Caco-2 (cell line): ENCODE measurements at regions of chrX and their contacts with region 1.

Region 1: GRCh38 chrX:108025954-108026600 is 18.8 kb upstream of the VSIG1 start:
- DNase-seq: no peak
- H3K4me3 ChIP-seq: no peak overlapping the region
- H3K4me3 Mint-ChIP-seq: no peak overlapping the region
- H3K27ac Mint-ChIP-seq: no peak overlapping the region
- H3K4me1 ChIP-seq: no peaks in the 10 kb centered on the region
- H3K4me1 Mint-ChIP-seq: peaks cover 6% of the 10 kb centered on the region
- H3K27me3 ChIP-seq: no peaks in the 10 kb centered on the region
- H3K27me3 Mint-ChIP-seq: no peaks in the 10 kb centered on the region
- CTCF ChIP-seq: no peak

Region 2: DNA sequence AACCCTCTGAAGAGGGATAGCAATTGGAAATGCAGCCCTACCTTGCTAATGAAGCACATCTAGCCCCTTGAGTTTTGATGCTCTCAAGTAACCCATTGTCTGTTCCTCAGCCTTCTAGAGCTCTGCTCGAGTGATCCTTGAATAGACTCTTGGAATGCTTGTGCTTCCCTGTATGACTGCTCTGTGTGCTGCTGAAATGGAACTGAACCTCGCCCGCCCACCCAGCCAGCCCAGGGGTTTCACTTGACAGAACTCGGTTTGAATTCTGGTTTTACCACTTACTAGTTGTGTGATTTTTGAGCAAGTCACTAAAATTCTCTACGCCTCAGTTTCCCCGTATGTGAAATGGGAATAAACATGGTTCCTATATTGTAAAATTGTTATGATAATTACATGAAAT is 123.4 kb before region 1 on chrX:
- CTCF ChIA-PET with region 1: no interaction called
- POLR2A ChIA-PET with region 1: no interaction called
- intact Hi-C with region 1: no loop called
- DNase-seq: no peak
- H3K4me3 ChIP-seq: no peak overlapping the region
- H3K4me3 Mint-ChIP-seq: no peak overlapping the region
- H3K27ac Mint-ChIP-seq: no peak overlapping the region
- H3K4me1 ChIP-seq: no peaks in the 10 kb centered on the region
- H3K4me1 Mint-ChIP-seq: no peaks in the 10 kb centered on the region
- H3K27me3 ChIP-seq: no peaks in the 10 kb centered on the region
- H3K27me3 Mint-ChIP-seq: peaks cover 14% of the 10 kb centered on the region
- CTCF ChIP-seq: no peak

Region 3: DNA sequence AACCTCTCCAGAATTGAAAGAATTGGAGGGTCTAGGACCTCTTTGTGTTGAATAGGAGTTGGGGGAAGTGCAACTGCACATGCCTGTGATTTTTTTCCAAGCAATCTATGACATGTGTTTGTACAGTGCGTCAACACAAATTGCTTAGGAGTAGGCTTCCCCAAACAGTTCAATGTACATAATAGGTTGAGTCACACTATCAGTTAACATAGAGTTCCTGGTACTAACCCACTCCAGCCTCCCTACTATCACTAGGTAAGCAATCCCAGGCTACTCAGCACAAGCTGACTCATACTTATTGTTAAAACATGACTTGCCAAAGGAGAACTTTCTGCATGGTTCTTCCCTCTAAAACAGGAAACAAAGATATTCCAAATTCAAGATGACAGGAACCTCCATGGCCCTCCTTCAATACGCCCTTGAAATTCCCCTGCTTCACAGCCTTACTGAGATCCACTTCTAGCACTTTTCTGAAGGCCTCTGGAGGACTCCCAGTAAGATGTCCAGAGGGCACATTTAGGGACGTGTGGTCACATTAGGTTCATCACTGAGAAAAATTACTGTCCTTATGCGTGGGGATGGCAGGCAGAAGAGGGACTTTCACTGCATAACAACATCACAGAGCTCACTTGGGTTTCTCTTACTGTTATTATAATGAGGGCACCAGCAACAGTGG is 10.4 kb after region 1 on chrX:
- CTCF ChIA-PET with region 1: no interaction called
- POLR2A ChIA-PET with region 1: no interaction called
- intact Hi-C with region 1: loop called (anchors 1 kb)
- DNase-seq: peak; percentile 58 to 64
- H3K4me3 ChIP-seq: no peak overlapping the region
- H3K4me3 Mint-ChIP-seq: peak overlapping the region; percentile 27
- H3K27ac Mint-ChIP-seq: peak overlapping the region; percentile 90
- H3K4me1 ChIP-seq: peaks cover 24% of the 10 kb centered on the region
- H3K4me1 Mint-ChIP-seq: peaks cover 6% of the 10 kb centered on the region
- H3K27me3 ChIP-seq: no peaks in the 10 kb centered on the region
- H3K27me3 Mint-ChIP-seq: no peaks in the 10 kb centered on the region
- CTCF ChIP-seq: no peak